ENCODE measurements at regions of chr12 and their contacts with region 1.

Region 1: GRCh38 chr12:110431957-110432587 is 18.1 kb downstream of the ARPC3 start:
- DNase-seq: peak; percentile 39
- ATAC-seq: peak; percentile 40
- H3K4me3 Mint-ChIP-seq: no peak overlapping the region
- H3K27ac Mint-ChIP-seq: no peak overlapping the region
- H3K4me1 Mint-ChIP-seq: peaks cover 5% of the 10 kb centered on the region
- H3K27me3 Mint-ChIP-seq: no peaks in the 10 kb centered on the region
- CTCF ChIP-seq: no peak

Region 2: GRCh38 chr12:110004598-110004997 is 427.5 kb before region 1 on chr12:
- CTCF ChIA-PET with region 1: no interaction called
- POLR2A ChIA-PET with region 1: no interaction called
- intact Hi-C with region 1: no loop called
- DNase-seq: no peak
- ATAC-seq: peak; percentile 74
- H3K4me3 Mint-ChIP-seq: peak overlapping the region; percentile 15
- H3K27ac Mint-ChIP-seq: peak overlapping the region; percentile 15
- H3K4me1 Mint-ChIP-seq: peaks cover 74% of the 10 kb centered on the region
- H3K27me3 Mint-ChIP-seq: no peaks in the 10 kb centered on the region
- CTCF ChIP-seq: no peak

Region 3: DNA sequence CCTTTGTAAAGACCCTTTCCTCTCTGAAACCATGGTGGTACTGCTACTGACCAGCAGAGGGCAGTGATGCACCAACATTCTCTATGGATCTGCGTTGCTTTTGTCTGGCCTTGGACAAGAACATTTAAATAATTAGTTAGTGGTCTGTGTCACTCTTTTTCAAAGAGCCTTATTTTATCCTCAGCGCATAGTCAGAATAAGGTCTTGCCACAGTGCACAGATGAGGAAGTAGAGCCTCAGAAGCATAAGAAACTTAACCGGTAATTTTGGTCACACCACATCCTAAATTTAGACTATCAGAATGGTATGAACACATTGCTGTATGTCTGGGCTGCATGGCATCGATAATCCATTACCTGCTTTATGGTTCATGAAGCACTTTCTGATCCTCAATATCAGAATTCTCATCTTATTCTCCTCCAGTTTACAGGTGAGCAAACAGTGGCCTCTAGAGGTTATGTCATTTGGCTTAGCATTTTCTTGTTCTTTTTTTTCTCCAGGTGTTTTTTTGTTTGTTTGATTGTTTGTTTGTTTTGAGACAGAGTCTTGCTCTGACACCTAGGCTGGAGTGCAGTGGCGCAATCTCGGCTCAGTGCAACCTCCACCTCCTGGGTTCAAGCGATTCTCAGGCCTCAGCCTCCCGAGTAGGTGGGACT is 331.6 kb before region 1 on chr12:
- CTCF ChIA-PET with region 1: interaction called, 52 read pairs
- POLR2A ChIA-PET with region 1: interaction called, 7 read pairs
- intact Hi-C with region 1: loop called (anchors 1 kb)
- DNase-seq: peak; percentile 78
- ATAC-seq: peak; percentile 78
- H3K4me3 Mint-ChIP-seq: no peak overlapping the region
- H3K27ac Mint-ChIP-seq: peak overlapping the region; percentile 51
- H3K4me1 Mint-ChIP-seq: peaks cover 8% of the 10 kb centered on the region
- H3K27me3 Mint-ChIP-seq: peaks cover 2% of the 10 kb centered on the region
- CTCF ChIP-seq: peak; percentile 90

Region 4: GRCh38 chr12:110355073-110355472 is 77.0 kb before region 1 on chr12:
- CTCF ChIA-PET with region 1: interaction called, 24 read pairs
- POLR2A ChIA-PET with region 1: interaction called, 5 read pairs
- intact Hi-C with region 1: loop called (anchors 2 kb)
- DNase-seq: peak; percentile 60
- ATAC-seq: peak; percentile 65
- H3K4me3 Mint-ChIP-seq: no peak overlapping the region
- H3K27ac Mint-ChIP-seq: no peak overlapping the region
- H3K4me1 Mint-ChIP-seq: peaks cover 17% of the 10 kb centered on the region
- H3K27me3 Mint-ChIP-seq: peaks cover 4% of the 10 kb centered on the region
- CTCF ChIP-seq: peak; percentile 49

Region 5: DNA sequence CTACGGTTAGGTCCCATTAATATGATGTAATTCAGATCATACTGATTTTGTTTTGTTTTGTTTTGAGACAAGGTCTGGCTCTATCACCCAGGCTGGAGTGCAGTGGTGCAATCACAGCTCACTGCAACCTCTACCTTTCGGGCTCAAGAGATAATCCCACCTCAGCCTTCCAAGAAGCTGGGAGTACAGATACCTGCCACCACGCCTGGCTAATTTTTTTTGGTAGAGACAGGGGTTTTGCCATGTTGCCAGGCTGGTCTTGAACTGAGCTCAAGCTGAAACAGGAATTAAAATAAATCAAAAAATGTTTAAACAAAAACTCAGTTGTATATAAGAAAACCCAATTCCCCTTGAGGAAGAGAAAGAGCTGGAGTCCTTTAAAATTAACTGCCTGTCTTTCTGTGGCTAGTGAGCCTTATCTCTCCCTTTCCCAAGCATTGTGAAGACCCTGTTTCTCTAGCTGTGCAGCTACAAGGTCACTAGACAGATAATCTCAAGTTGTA is 10.9 kb before region 1 on chr12:
- CTCF ChIA-PET with region 1: interaction called, 33 read pairs
- POLR2A ChIA-PET with region 1: interaction called, 3 read pairs
- intact Hi-C with region 1: no loop called
- DNase-seq: no peak
- ATAC-seq: no peak
- H3K4me3 Mint-ChIP-seq: no peak overlapping the region
- H3K27ac Mint-ChIP-seq: no peak overlapping the region
- H3K4me1 Mint-ChIP-seq: no peaks in the 10 kb centered on the region
- H3K27me3 Mint-ChIP-seq: no peaks in the 10 kb centered on the region
- CTCF ChIP-seq: no peak

Region 6: GRCh38 chr12:110468212-110469048 is 36.4 kb after region 1 on chr12 and contains the starts of genes FAM216A and GPN3:
- CTCF ChIA-PET with region 1: interaction called, 17 read pairs
- POLR2A ChIA-PET with region 1: interaction called, 5 read pairs
- intact Hi-C with region 1: no loop called
- DNase-seq: peak; percentile 97
- ATAC-seq: peak; percentile 82
- H3K4me3 Mint-ChIP-seq: peak within 1 kb of the TSS; percentile 88
- H3K27ac Mint-ChIP-seq: peak within 1 kb of the TSS; percentile 99
- H3K4me1 Mint-ChIP-seq: peaks cover 43% of the 10 kb centered on the region
- H3K27me3 Mint-ChIP-seq: no peaks in the 10 kb centered on the region
- CTCF ChIP-seq: no peak
- total RNA-seq, gene FAM216A: 77.1 to 77.3 TPM
- total RNA-seq, gene GPN3: 69.1 TPM

Region 7: DNA sequence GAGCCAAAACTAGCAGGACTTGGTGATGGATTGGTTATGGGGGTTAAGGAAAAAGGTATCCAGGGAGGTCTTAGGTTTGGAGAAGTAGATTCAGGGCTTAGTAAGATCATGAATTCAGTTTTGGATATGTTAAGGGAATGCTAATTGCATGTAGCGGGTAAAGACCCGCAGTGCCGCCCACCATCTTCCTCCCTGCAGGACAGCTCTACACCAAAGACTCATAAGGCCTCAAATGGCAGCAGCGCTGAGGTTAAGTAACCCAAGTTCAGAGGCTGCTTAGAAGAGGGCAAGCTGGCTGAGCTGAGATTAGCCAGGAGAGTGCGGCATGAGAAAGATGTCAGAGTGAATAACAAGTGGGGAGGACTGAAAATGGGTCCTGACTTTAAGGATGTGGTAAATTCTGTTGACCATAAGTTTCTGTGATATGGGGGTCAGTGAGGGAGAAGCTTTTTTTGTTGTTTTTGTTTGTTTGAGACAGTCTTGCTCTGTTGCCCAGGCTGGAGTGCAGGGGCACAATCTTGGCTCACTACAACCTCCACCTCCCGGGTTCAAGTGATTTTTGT is 96.3 kb after region 1 on chr12:
- CTCF ChIA-PET with region 1: no interaction called
- POLR2A ChIA-PET with region 1: no interaction called
- intact Hi-C with region 1: no loop called
- DNase-seq: no peak
- ATAC-seq: no peak
- H3K4me3 Mint-ChIP-seq: no peak overlapping the region
- H3K27ac Mint-ChIP-seq: no peak overlapping the region
- H3K4me1 Mint-ChIP-seq: peaks cover 21% of the 10 kb centered on the region
- H3K27me3 Mint-ChIP-seq: no peaks in the 10 kb centered on the region
- CTCF ChIP-seq: no peak